GM10248 (cell line): ENCODE measurements at regions of chr14 and their contacts with region 1.

Region 1: DNA sequence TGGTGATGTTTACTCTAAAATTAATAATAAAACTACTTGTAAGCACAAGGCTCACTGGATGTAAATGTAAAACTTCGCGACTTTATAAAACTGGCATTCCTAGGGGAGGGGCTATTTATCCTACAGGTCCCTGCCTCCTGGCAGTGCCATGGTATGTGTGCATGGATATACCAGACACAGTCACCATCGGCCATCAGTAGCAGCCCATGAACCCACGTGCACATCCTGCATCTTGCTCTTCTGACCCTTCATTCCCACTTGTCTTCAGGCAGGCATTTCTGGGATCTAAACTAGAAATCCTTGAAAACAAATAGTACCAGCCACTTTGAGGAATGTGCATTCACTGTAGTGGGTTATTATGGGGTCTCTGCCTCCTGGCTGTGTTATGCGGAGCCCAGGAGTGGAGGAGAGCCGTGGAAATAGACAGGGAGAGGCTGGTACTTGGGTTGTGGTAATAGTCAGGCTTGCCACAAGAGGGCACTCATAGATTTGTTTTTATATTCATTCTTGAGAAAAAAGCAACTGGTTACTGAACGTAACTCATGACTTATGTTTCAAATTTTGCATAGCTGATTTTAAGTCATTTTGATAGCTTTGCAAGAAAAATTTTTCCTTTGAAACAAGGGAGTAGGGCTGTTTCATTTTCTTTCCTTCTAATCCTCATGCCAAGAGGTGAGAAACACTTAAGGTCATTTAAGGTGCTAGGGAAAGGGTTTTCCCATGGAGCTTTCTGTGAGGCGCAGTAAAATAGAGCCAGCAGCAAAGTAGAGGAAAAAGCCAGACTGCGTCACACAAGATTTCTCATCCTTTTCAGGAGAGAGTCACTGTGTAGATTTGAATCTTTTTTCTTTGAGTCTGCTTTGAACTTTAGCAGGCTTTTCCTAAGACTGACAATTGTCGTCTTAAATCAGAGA is 17.4 kb upstream of the GALNT16 start:
- DNase-seq: peak; percentile 77
- CTCF ChIP-seq: peak; percentile 73

Region 2: GRCh38 chr14:69226178-69226577 is 16.4 kb before region 1 on chr14:
- CTCF ChIA-PET with region 1: interaction called, 21 read pairs
- POLR2A ChIA-PET with region 1: no interaction called
- DNase-seq: no peak
- CTCF ChIP-seq: no peak

Region 3: DNA sequence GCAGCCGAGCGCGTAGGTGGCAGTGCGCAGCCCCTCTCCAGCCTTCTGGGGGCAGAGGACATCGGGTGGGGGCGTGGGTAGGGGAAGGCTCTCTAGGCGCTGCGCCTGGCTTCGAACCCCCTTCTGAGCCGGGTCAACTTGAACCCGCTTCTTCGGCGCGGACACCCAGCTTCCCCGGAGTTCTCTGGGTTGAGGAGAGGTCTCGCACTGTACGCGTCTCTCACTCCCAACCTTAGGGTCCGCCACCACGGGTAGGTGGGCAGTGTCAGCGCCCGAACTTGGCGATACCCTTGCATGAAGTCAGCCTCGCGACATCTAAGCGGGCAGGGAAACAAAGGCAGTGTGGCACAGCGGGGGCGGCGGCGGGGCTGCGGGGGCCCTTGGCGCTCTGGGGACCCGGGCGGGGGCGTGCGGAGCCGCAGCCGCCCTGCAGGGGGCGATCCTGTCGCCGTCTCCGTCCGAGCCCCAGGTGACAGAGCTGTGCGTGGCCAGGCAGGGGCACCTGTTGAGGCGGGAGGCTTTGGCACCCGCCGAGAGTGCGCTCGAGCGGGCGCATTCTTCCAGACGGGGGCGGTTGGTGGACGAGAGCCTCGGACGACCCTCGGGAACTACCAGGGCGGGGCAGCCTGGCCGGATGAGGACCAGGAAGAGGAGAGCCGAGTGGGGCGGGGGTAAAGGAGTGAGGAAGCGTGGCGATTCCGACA is 18.4 kb after region 1 on chr14:
- CTCF ChIA-PET with region 1: interaction called, 21 read pairs
- POLR2A ChIA-PET with region 1: no interaction called
- DNase-seq: peak; percentile 89
- CTCF ChIP-seq: peak; percentile 63

Region 4: GRCh38 chr14:69428289-69428998 is 185.9 kb after region 1 on chr14:
- CTCF ChIA-PET with region 1: no interaction called
- POLR2A ChIA-PET with region 1: no interaction called
- DNase-seq: peak; percentile 63
- CTCF ChIP-seq: no peak

Region 5: GRCh38 chr14:69468949-69469348 is 226.4 kb after region 1 on chr14:
- CTCF ChIA-PET with region 1: interaction called, 80 read pairs
- POLR2A ChIA-PET with region 1: no interaction called
- DNase-seq: no peak
- CTCF ChIP-seq: no peak

Region 6: GRCh38 chr14:69554500-69554899 is 311.9 kb after region 1 on chr14:
- CTCF ChIA-PET with region 1: interaction called, 10 read pairs
- POLR2A ChIA-PET with region 1: no interaction called
- DNase-seq: no peak
- CTCF ChIP-seq: no peak